Gastrocnemius medialis (tissue), 4 donors: ENCODE measurements at regions of chr12 and their contacts with region 1.

Region 1: DNA sequence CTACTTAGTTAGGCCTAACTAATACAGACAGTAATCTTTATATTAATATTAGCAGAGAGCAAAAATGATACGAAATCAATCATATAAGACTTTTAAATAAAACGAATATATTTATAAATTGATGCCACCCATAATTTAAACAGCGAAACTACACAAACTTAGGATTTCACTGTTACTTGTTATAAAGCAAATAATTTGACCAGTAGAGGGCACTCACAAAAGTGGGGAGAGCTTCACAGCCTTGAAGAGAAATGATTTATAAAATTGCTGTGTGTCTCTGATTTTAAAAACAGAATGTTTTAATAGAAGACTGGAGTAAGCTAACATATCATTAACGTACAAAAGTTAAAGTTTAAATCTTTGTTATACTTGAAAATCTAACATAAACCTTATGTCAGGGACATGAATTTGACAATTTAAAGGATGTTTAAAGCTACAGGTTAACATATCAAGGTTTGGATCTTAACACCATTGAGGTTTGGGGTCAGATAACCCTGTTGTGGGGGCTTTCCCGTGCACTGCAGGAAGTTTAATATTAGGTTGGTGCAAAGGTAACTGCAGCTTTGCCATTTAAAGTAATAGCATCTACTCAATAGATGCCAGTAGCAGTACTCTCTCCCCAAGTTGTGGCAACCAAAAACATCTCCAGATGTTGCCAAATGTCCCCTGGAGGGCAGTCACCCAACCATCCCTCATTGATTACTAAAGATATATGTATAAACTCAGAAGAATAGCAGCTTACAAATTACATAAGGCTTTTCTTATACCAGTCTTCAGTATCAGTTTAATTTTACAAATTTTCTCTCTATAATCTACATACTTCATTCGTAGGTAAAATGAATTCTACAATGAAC is 9.3 kb downstream of the KRAS start:
- DNase-seq: no peak
- ATAC-seq: peak in 1 of 2 donors; percentile 71
- H3K4me3 ChIP-seq: no peak overlapping the region
- H3K27ac ChIP-seq: no peak overlapping the region
- H3K4me1 ChIP-seq: peaks cover 0 to 4% of the 10 kb centered on the region in 2 donors
- H3K27me3 ChIP-seq: no peaks in the 10 kb centered on the region
- CTCF ChIP-seq: peak; percentile 31 to 72 (median 58)
- POLR2A ChIP-seq: no peak

Region 2: DNA sequence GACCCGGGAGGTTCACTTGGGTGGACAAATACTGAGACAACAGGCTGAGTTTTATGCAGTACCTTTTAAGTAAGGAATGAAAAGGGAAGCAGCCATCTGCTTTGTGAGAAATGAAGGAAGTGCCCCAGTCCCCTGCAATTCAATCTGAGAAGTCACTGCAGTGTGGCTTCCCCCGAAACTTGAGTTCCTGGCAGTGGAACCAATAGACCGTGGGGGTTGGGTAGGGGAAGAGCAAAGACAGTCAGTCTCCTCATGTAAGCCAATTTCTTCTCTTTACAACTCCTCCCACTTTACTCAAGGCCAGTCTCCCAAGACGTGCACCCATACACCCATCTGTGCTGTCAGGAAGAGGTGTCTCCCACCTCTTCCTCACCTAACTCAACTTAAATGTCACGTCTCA is 499.0 kb before region 1 on chr12:
- in situ Hi-C with region 1: no loop called
- intact Hi-C with region 1: no loop called
- DNase-seq: peak; percentile 23 to 38
- ATAC-seq: no peak
- H3K4me3 ChIP-seq: no peak overlapping the region
- H3K27ac ChIP-seq: no peak overlapping the region
- H3K4me1 ChIP-seq: no peaks in the 10 kb centered on the region
- H3K27me3 ChIP-seq: no peaks in the 10 kb centered on the region
- CTCF ChIP-seq: no peak
- POLR2A ChIP-seq: no peak

Region 3: DNA sequence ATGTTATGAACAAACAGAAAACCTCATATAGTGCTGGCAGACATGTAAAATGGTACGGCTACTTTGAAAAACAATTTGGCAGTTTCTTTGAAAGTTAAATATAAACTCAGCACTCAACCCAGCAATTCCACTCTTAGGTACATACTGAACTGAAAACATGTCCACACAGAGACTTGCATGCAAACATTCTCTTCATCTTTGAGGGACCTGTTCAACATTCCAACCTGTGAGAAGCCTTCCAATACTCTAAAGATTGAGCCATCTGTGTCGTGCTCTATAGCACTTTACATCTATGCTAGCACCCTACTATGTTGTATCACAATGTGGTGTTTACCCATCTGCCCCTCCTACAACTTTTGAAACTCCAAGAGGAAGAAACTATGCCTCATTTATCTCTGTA is 125.7 kb before region 1 on chr12:
- in situ Hi-C with region 1: no loop called
- intact Hi-C with region 1: no loop called
- DNase-seq: no peak
- ATAC-seq: no peak
- H3K4me3 ChIP-seq: no peak overlapping the region
- H3K27ac ChIP-seq: no peak overlapping the region
- H3K4me1 ChIP-seq: no peaks in the 10 kb centered on the region
- H3K27me3 ChIP-seq: no peaks in the 10 kb centered on the region
- CTCF ChIP-seq: no peak
- POLR2A ChIP-seq: no peak

Region 4: DNA sequence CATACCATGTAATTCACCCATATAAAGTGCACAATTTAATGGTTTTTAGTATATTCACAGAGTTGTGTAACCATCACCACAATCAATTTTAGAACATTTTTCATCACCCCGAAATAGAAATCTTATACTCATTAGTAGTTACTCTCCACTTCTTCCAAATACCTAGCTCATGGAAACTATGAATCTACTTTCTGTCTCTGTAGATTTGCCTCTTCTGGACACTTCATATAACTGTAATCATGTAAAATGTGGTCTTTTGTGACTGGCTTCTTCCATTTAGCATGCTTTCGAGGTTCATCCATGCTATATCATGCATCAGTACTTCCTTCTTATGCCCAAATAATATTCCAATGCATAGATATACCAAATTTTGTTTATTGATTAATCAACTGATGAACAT is 57.3 kb before region 1 on chr12:
- in situ Hi-C with region 1: no loop called
- intact Hi-C with region 1: no loop called
- DNase-seq: no peak
- ATAC-seq: no peak
- H3K4me3 ChIP-seq: no peak overlapping the region
- H3K27ac ChIP-seq: no peak overlapping the region
- H3K4me1 ChIP-seq: peaks cover 0 to 4% of the 10 kb centered on the region in 2 donors
- H3K27me3 ChIP-seq: no peaks in the 10 kb centered on the region
- CTCF ChIP-seq: no peak
- POLR2A ChIP-seq: no peak

Region 5: GRCh38 chr12:25386831-25387731 is 145.7 kb after region 1 on chr12:
- in situ Hi-C with region 1: no loop called
- intact Hi-C with region 1: loop called (anchors 1 kb)
- DNase-seq: peak; percentile 76 to 85
- ATAC-seq: peak; percentile 66 to 67
- H3K4me3 ChIP-seq: peak overlapping the region; percentile 69 to 94 (median 82)
- H3K27ac ChIP-seq: peak overlapping the region; percentile 91 to 98 (median 96)
- H3K4me1 ChIP-seq: peaks cover 0 to 6% of the 10 kb centered on the region in 2 donors
- H3K27me3 ChIP-seq: no peaks in the 10 kb centered on the region
- CTCF ChIP-seq: peak; percentile 82 to 89 (median 84)
- POLR2A ChIP-seq: peak in 1 of 2 donors; percentile 8

Region 6: DNA sequence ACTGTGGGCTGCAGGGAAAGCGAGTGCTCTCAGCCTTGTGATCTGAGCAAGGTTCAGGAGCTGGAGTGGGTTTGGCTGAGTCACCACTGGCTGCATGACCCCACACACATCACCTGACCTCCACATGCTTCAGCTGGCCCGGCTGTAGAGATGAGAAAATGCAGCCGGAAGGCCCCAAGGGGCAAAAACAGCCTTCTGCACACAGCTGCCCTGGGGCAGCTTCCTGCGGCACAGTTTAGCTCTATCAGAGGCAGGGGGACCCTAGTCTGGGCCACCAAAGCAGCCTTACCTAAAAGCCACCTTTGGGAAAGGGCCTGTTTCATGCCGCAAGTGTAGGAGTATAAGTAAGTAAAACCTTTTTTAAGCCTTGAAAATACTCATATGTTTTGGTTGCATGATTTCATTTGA is 1077.3 kb after region 1 on chr12:
- in situ Hi-C with region 1: no loop called
- intact Hi-C with region 1: no loop called
- DNase-seq: peak; percentile 49 to 62
- ATAC-seq: peak; percentile 67 to 72
- H3K4me3 ChIP-seq: no peak overlapping the region
- H3K27ac ChIP-seq: peak overlapping the region; percentile 2 to 57 (median 40)
- H3K4me1 ChIP-seq: peaks cover 0 to 8% of the 10 kb centered on the region in 2 donors
- H3K27me3 ChIP-seq: no peaks in the 10 kb centered on the region
- CTCF ChIP-seq: no peak
- POLR2A ChIP-seq: no peak